A673 (cell line): ENCODE measurements at regions of chr2 and their contacts with region 1.

Region 1: GRCh38 chr2:105369747-105370690 is 28.8 kb downstream of the FHL2 start:
- DNase-seq: peak; percentile 91
- H3K4me3 ChIP-seq: no peak overlapping the region
- H3K27ac ChIP-seq: no peak overlapping the region
- H3K4me1 ChIP-seq: no peaks in the 10 kb centered on the region
- H3K27me3 ChIP-seq: no peaks in the 10 kb centered on the region
- CTCF ChIP-seq: peak; percentile 86

Region 2: GRCh38 chr2:105409717-105410116 is 39.7 kb after region 1 on chr2:
- CTCF ChIA-PET with region 1: no interaction called
- POLR2A ChIA-PET with region 1: no interaction called
- intact Hi-C with region 1: no loop called
- DNase-seq: no peak
- H3K4me3 ChIP-seq: no peak overlapping the region
- H3K27ac ChIP-seq: no peak overlapping the region
- H3K4me1 ChIP-seq: no peaks in the 10 kb centered on the region
- H3K27me3 ChIP-seq: no peaks in the 10 kb centered on the region
- CTCF ChIP-seq: no peak

Region 3: DNA sequence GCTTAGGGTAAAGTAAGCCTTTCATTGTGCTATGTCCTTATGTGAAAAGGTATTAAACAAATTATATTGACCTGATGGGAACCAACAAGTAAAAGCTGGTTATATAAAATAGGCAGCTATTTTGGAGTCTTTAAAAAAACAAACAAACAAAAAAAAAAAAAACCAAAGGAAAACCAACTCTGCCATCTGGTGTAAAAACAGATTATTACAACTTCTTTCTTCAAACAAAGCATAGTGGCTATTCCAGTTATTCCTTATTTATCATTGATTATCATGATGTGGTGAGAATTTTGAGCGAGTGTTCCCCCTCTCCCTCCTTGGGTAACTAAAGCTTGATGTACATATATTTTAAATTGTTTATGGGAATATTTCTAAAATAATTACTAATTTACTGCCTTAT is 151.2 kb after region 1 on chr2:
- CTCF ChIA-PET with region 1: no interaction called
- POLR2A ChIA-PET with region 1: no interaction called
- intact Hi-C with region 1: loop called (anchors 1 kb)
- DNase-seq: peak; percentile 7
- H3K4me3 ChIP-seq: no peak overlapping the region
- H3K27ac ChIP-seq: no peak overlapping the region
- H3K4me1 ChIP-seq: no peaks in the 10 kb centered on the region
- H3K27me3 ChIP-seq: no peaks in the 10 kb centered on the region
- CTCF ChIP-seq: peak; percentile 60

Region 4: DNA sequence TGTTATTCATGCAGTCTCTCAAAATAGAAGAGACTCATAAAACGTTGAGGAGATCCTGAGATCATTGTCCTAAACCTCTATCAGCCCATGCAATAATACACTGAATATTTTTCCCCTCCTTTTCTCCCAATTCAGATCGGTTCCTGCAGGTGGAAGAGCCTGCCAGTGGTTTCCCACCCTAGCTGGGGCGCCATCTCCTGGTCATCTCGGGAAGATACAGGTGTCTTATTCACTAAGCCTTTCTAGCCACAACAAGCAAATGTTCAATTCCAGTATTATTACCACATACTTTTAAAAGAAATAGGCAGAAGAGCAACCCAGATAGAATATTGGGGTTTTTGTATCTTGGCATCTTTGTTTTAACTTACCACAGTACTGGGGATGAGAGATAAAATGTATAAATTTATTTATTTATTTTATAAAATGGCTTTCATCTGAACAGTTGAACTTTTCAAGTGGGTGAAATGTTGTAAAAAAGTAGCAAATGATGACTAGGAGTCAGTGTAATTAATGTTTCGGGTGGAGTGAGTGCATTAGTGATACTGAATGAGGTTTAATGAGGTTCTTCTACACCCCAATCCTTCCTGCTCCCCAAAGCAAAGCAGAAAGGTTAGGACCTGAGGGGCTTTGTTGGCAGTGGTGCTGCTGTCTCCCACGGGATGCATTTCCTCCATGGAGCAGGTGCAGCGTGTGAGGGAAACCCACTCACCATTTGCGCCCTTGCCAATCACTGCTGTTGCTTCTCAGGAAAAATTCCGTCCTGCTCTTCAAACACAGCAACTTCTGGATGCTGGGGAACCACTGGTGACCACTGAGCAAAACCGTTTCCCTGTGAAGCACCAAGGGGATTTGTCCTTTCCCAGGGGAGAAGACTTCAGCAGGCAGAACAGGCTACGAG is 176.0 kb after region 1 on chr2:
- CTCF ChIA-PET with region 1: no interaction called
- POLR2A ChIA-PET with region 1: no interaction called
- intact Hi-C with region 1: loop called (anchors 1 kb)
- DNase-seq: peak; percentile 72
- H3K4me3 ChIP-seq: no peak overlapping the region
- H3K27ac ChIP-seq: no peak overlapping the region
- H3K4me1 ChIP-seq: no peaks in the 10 kb centered on the region
- H3K27me3 ChIP-seq: peaks cover 5% of the 10 kb centered on the region
- CTCF ChIP-seq: peak; percentile 92

Region 5: GRCh38 chr2:106085181-106085940 is 715.3 kb after region 1 on chr2:
- CTCF ChIA-PET with region 1: no interaction called
- POLR2A ChIA-PET with region 1: no interaction called
- intact Hi-C with region 1: loop called (anchors 10 kb)
- DNase-seq: peak; percentile 62
- H3K4me3 ChIP-seq: no peak overlapping the region
- H3K27ac ChIP-seq: no peak overlapping the region
- H3K4me1 ChIP-seq: no peaks in the 10 kb centered on the region
- H3K27me3 ChIP-seq: no peaks in the 10 kb centered on the region
- CTCF ChIP-seq: peak; percentile 60

Region 6: GRCh38 chr2:106542811-106543259 is 1172.8 kb after region 1 on chr2:
- CTCF ChIA-PET with region 1: no interaction called
- POLR2A ChIA-PET with region 1: no interaction called
- intact Hi-C with region 1: loop called (anchors 2 kb)
- DNase-seq: peak; percentile 69
- H3K4me3 ChIP-seq: peak overlapping the region; percentile 27
- H3K27ac ChIP-seq: no peak overlapping the region
- H3K4me1 ChIP-seq: peaks cover 15% of the 10 kb centered on the region
- H3K27me3 ChIP-seq: peaks cover 12% of the 10 kb centered on the region
- CTCF ChIP-seq: peak; percentile 83